Mammary epithelial cell (primary cell): ENCODE measurements at regions of chr2 and their contacts with region 1.

Region 1: DNA sequence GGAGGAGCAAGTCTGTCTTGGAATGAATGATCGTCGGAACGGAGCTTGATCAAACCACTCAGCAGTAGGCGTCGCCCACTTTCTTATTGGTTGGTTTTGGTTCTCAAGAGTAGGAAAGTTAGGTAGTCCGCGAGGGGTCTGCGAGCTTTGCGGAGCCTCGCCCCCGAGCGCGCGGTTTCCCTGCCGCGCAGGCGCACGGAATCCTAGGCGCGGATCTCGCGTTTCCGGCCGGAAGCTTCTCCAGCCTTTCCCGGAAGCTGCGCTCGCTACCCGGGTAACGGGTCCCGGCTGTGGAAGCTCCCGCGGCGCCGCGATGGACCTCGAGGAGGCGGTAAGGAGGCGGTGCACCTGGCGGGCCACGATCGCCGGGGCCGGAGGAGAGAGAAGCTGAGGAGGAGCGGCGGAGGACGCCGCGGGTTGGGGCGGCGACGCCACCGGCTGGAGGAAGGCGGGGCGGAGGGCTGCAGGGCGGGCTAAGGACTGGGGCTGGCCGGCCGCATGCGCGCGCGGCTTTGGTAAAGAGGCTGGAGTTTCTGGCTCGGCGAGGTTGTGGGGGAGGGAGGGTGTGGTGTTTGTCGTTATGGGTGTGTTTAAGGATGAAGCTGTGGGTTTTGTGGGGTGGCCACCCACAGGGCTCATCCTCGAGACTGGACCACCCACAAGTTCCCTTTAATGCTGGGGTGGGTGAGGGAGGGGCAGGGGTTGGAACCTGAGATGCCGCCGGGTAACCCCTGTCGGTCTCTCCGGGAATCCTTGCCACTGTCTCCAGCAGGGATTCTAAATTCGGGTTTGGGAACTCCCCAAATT is at the start of gene TAF1B:
- DNase-seq: peak; percentile 95
- H3K4me3 ChIP-seq: peak within 1 kb of the TSS; percentile 69 to 83 (median 73)
- H3K27ac ChIP-seq: peak within 1 kb of the TSS; percentile 91
- H3K4me1 ChIP-seq: peaks cover 40% of the 10 kb centered on the region
- H3K27me3 ChIP-seq: no peaks in the 10 kb centered on the region
- CTCF ChIP-seq: peak; percentile 26 to 57
- total RNA-seq, gene TAF1B: 13.5 to 25.5 TPM

Region 2: DNA sequence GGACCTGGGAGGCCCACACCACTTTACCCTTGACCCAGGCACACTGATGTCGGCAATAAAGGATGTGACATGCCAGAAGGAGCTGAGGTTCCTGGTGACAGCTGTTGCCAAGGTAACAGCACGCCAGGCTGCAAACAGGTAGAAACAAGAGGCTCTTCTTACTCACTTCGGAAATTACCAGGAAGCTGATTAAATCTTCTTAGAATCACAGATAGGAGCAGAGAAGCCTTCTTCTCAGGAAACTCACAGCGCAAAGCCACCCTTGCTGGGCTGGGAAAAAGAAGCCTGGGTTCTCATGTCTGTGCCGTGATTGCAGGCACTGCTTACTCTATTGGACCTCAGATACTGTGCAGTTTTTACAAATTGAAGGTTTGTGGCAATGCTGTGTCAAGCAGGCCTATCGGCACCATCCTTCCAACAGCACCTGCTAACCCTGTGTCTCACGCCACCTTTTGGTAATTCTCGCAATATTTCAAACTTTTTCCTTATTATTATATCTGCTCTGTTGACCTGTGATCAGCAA is 61.2 kb before region 1 on chr2:
- CTCF ChIA-PET with region 1: interaction called, 11 read pairs
- dilution Hi-C with region 1: no loop called
- in situ Hi-C with region 1: no loop called
- intact Hi-C with region 1: no loop called
- DNase-seq: peak; percentile 88
- H3K4me3 ChIP-seq: no peak overlapping the region
- H3K27ac ChIP-seq: peak overlapping the region; percentile 79
- H3K4me1 ChIP-seq: peaks cover 28% of the 10 kb centered on the region
- H3K27me3 ChIP-seq: no peaks in the 10 kb centered on the region
- CTCF ChIP-seq: no peak

Region 3: GRCh38 chr2:9813312-9814133 is 29.9 kb before region 1 on chr2:
- CTCF ChIA-PET with region 1: interaction called, 4 read pairs
- dilution Hi-C with region 1: no loop called
- in situ Hi-C with region 1: no loop called
- intact Hi-C with region 1: loop called (anchors 1 kb)
- DNase-seq: peak; percentile 44
- H3K4me3 ChIP-seq: no peak overlapping the region
- H3K27ac ChIP-seq: no peak overlapping the region
- H3K4me1 ChIP-seq: peaks cover 17% of the 10 kb centered on the region
- H3K27me3 ChIP-seq: no peaks in the 10 kb centered on the region
- CTCF ChIP-seq: peak; percentile 95

Region 4: GRCh38 chr2:9897331-9897737 is 53.9 kb after region 1 on chr2:
- CTCF ChIA-PET with region 1: interaction called, 3 read pairs
- dilution Hi-C with region 1: no loop called
- in situ Hi-C with region 1: no loop called
- intact Hi-C with region 1: loop called (anchors 2 kb)
- DNase-seq: peak; percentile 99
- H3K4me3 ChIP-seq: peak overlapping the region in 1 of 3 experiments; percentile 2
- H3K27ac ChIP-seq: peak overlapping the region; percentile 97
- H3K4me1 ChIP-seq: peaks cover 36% of the 10 kb centered on the region
- H3K27me3 ChIP-seq: no peaks in the 10 kb centered on the region
- CTCF ChIP-seq: no peak

Region 5: GRCh38 chr2:9914384-9915065 is 71.1 kb after region 1 on chr2:
- CTCF ChIA-PET with region 1: interaction called, 4 read pairs
- dilution Hi-C with region 1: no loop called
- in situ Hi-C with region 1: no loop called
- intact Hi-C with region 1: loop called (anchors 1 kb)
- DNase-seq: peak; percentile 82
- H3K4me3 ChIP-seq: no peak overlapping the region
- H3K27ac ChIP-seq: peak overlapping the region; percentile 15
- H3K4me1 ChIP-seq: peaks cover 8% of the 10 kb centered on the region
- H3K27me3 ChIP-seq: no peaks in the 10 kb centered on the region
- CTCF ChIP-seq: peak; percentile 27 to 71

Region 6: DNA sequence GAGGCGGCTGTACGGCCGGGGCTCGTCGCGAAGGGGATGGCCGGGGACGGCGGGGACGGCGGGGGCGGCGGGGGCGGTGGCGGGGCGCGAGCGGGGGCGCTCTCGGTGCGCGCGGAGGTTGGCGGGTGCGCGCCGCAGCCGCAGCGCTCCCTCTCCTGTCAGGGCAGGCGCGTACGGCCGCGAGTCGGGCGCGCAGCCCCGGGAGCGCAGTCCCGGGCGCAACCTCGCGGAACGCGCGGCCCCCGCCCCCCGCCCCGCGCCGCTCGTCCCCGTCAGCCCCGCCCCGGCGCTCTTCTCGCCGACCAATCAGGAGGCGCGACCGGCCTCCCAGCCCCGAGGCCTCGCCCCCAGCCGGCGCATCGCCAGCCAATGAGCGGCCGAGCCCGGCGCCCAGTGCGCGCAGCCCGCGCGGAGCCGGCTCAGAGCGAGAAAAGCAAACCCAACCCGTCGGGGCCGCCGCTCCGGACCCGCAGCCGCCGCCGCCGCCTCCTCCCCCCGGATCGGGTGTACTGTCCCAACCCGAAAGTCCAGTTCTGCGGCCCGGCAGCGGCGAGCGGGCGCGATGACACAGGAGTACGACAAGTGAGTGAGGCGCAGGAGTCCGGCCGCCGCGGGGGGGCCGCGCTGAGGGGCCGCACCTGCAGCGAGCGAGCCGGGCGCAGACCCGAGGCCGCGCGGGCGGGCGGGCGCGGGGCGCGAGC is 108.0 kb after region 1 on chr2 and contains the start of gene GRHL1:
- CTCF ChIA-PET with region 1: no interaction called
- dilution Hi-C with region 1: no loop called
- in situ Hi-C with region 1: no loop called
- intact Hi-C with region 1: loop called (anchors 1 kb)
- DNase-seq: peak; percentile 91
- H3K4me3 ChIP-seq: peak within 1 kb of the TSS; percentile 68 to 78 (median 69)
- H3K27ac ChIP-seq: no peak within 1 kb of the TSS
- H3K4me1 ChIP-seq: peaks cover 10% of the 10 kb centered on the region
- H3K27me3 ChIP-seq: peaks cover 2% of the 10 kb centered on the region
- CTCF ChIP-seq: no peak
- total RNA-seq, gene GRHL1: 2.2 to 6.0 TPM